Heart right ventricle (tissue), 16 donors: ENCODE measurements at regions of chr3 and their contacts with region 1.

Region 1: GRCh38 chr3:150408221-150409102 is at the start of gene TSC22D2:
- DNase-seq: peak; percentile 96 to 98
- ATAC-seq: peak; percentile 86 to 93 (median 87)
- H3K4me3 ChIP-seq: peak within 1 kb of the TSS; percentile 78 to 92 (median 86)
- H3K27ac ChIP-seq: peak within 1 kb of the TSS; percentile 98 to 100 (median 100)
- H3K4me1 ChIP-seq: peaks cover 0 to 38% (median 25%) of the 10 kb centered on the region in 9 donors
- H3K27me3 ChIP-seq: no peaks in the 10 kb centered on the region
- CTCF ChIP-seq: peak in 6 of 9 donors; percentile 10 to 47 (median 32)
- total RNA-seq, gene TSC22D2: 17.2 to 73.1 (median 38.9) TPM

Region 2: GRCh38 chr3:150227839-150228238 is 180.6 kb before region 1 on chr3:
- intact Hi-C with region 1: loop called in 7 of 10 experiments (anchors 5 to 10 kb)
- DNase-seq: peak; percentile 11 to 59
- ATAC-seq: peak in 6 of 8 donors; percentile 14 to 47 (median 28)
- H3K4me3 ChIP-seq: no peak overlapping the region
- H3K27ac ChIP-seq: no peak overlapping the region
- H3K4me1 ChIP-seq: peaks cover 0 to 34% (median 6%) of the 10 kb centered on the region in 9 donors
- H3K27me3 ChIP-seq: peaks cover 0 to 7% (median 0%) of the 10 kb centered on the region in 7 donors
- CTCF ChIP-seq: peak; percentile 42 to 74 (median 61)

Region 3: GRCh38 chr3:150238998-150239619 is 169.4 kb before region 1 on chr3:
- intact Hi-C with region 1: loop called in 4 of 10 experiments (anchors 5 to 10 kb)
- DNase-seq: no peak
- ATAC-seq: peak in 3 of 8 donors; percentile 18 to 60 (median 20)
- H3K4me3 ChIP-seq: no peak overlapping the region
- H3K27ac ChIP-seq: no peak overlapping the region
- H3K4me1 ChIP-seq: peaks cover 0 to 37% (median 11%) of the 10 kb centered on the region in 9 donors
- H3K27me3 ChIP-seq: no peaks in the 10 kb centered on the region
- CTCF ChIP-seq: peak in 7 of 9 donors; percentile 14 to 53 (median 46)

Region 4: GRCh38 chr3:150371741-150372254 is 36.7 kb before region 1 on chr3:
- intact Hi-C with region 1: loop called in 6 of 10 experiments (anchors 1 to 5 kb)
- DNase-seq: peak in 1 of 2 donors; percentile 86
- ATAC-seq: peak; percentile 91 to 97 (median 96)
- H3K4me3 ChIP-seq: peak overlapping the region in 8 of 10 donors; percentile 13 to 45 (median 34)
- H3K27ac ChIP-seq: peak overlapping the region; percentile 62 to 97 (median 90)
- H3K4me1 ChIP-seq: peaks cover 0 to 45% (median 26%) of the 10 kb centered on the region in 9 donors
- H3K27me3 ChIP-seq: no peaks in the 10 kb centered on the region
- CTCF ChIP-seq: no peak

Region 5: DNA sequence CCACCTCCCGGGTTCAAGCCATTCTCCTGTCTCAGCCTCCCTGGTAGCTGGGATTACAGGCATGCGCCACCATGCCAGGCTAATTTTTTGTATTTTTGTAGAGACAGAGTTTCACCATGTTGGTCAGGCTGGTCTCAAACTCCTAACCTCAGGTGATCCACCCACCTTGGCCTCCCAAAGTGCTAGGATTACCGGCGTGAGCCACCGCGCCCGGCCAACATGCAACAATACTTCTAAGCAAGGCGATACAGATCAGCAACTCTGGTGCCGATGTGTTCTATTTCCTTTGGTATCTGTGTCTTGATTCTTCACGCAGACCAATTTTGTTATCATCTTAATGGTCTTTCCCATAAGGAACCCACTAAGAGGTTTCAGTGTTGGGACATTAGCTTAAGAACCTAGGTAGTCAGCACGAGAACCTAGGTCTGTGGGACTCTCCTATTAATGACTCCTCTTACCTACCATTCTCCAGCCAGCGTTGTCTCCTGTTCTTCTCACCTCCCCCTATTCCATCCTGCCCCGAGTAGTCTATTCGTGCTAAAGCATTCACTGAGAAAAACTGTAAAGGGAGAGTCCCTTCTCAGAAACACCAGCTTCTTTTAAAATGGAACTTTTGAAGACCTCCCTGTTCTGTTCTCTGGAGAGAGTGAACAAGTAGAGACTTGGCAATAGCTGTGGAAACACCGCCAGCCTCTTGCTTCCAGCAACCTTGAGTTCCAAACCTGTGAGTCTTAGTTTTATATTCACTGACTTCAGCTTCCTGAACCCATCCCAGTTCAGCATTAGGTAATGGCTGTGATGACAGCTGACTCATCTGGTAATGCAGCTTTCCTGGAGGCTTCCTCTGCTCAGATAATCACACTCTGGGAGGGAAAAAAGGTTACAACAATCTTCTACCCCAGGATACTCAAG is 60.8 kb after region 1 on chr3:
- intact Hi-C with region 1: loop called in 1 of 10 experiments (anchors 10 kb)
- DNase-seq: peak in 1 of 2 donors; percentile 8
- ATAC-seq: peak in 7 of 8 donors; percentile 38 to 96 (median 75)
- H3K4me3 ChIP-seq: no peak overlapping the region
- H3K27ac ChIP-seq: peak overlapping the region in 1 of 10 donors; percentile 7
- H3K4me1 ChIP-seq: peaks cover 0 to 12% (median 0%) of the 10 kb centered on the region in 9 donors
- H3K27me3 ChIP-seq: no peaks in the 10 kb centered on the region
- CTCF ChIP-seq: no peak

Region 6: GRCh38 chr3:150546226-150547044 is 138.0 kb after region 1 on chr3 and contains the starts of genes EIF2A and SERP1:
- intact Hi-C with region 1: loop called in 4 of 10 experiments (anchors 2 to 5 kb)
- DNase-seq: peak; percentile 98 to 99
- ATAC-seq: peak; percentile 97 to 99 (median 98)
- H3K4me3 ChIP-seq: peak within 1 kb of the TSS; percentile 80 to 92 (median 88)
- H3K27ac ChIP-seq: peak within 1 kb of the TSS; percentile 92 to 99 (median 99)
- H3K4me1 ChIP-seq: peaks cover 3 to 52% (median 33%) of the 10 kb centered on the region in 9 donors
- H3K27me3 ChIP-seq: no peaks in the 10 kb centered on the region
- CTCF ChIP-seq: no peak
- total RNA-seq, gene EIF2A: 67.5 to 86.5 (median 76.2) TPM
- total RNA-seq, gene SERP1: 17.5 to 33.7 (median 21.9) TPM